ENCODE measurements at regions of chrX and their contacts with region 1.

Region 1: GRCh38 chrX:1009771-1010170 is 202.7 kb downstream of the CRLF2 start:
- DNase-seq: no peak
- H3K4me3 ChIP-seq: no peak overlapping the region
- H3K27ac ChIP-seq: no peak overlapping the region
- H3K4me1 ChIP-seq: no peaks in the 10 kb centered on the region
- H3K27me3 ChIP-seq: no peaks in the 10 kb centered on the region
- CTCF ChIP-seq: no peak
- POLR2A ChIP-seq: no peak

Region 2: DNA sequence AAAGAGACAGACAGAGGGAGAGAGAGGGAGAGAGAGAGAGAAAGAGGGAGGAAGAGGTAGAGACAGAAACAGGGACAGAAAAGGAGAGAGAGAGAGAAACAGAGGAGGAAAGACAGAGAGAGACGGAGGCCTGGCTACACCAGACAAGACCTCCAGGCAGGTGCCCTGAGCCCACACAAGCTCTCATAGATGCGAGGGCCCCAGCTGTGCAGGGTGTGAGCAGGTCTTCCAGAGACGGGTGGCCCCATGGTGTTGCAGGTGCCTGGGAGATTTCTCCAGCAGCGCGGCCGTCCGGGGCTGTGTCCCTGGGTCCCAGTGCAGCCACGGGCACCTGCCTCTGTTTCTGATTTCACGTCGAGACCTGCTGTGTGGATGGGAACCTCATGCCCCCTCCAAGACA is 126.2 kb before region 1 on chrX:
- intact Hi-C with region 1: no loop called
- DNase-seq: no peak
- H3K4me3 ChIP-seq: no peak overlapping the region
- H3K27ac ChIP-seq: no peak overlapping the region
- H3K4me1 ChIP-seq: no peaks in the 10 kb centered on the region
- H3K27me3 ChIP-seq: no peaks in the 10 kb centered on the region
- CTCF ChIP-seq: no peak
- POLR2A ChIP-seq: no peak

Region 3: GRCh38 chrX:1052021-1052420 is 42.2 kb after region 1 on chrX:
- intact Hi-C with region 1: no loop called
- DNase-seq: no peak
- H3K4me3 ChIP-seq: no peak overlapping the region
- H3K27ac ChIP-seq: no peak overlapping the region
- H3K4me1 ChIP-seq: no peaks in the 10 kb centered on the region
- H3K27me3 ChIP-seq: no peaks in the 10 kb centered on the region
- CTCF ChIP-seq: no peak
- POLR2A ChIP-seq: no peak

Region 4: GRCh38 chrX:1102786-1103185 is 93.0 kb after region 1 on chrX:
- intact Hi-C with region 1: loop called (anchors 5 kb)
- DNase-seq: peak in 1 of 2 donors; percentile 24
- H3K4me3 ChIP-seq: no peak overlapping the region
- H3K27ac ChIP-seq: no peak overlapping the region
- H3K4me1 ChIP-seq: no peaks in the 10 kb centered on the region
- H3K27me3 ChIP-seq: peaks cover 0 to 11% of the 10 kb centered on the region in 2 donors
- CTCF ChIP-seq: no peak
- POLR2A ChIP-seq: no peak